Common myeloid progenitor, CD34-positive (primary cell): ENCODE measurements at regions of chr1 and their contacts with region 1.

Region 1: GRCh38 chr1:207910591-207911354 is at the start of gene CD34:
- DNase-seq: peak in 2 of 3 donors; percentile 63 to 77
- H3K4me3 ChIP-seq: peak within 1 kb of the TSS; percentile 76 to 90 (median 81)
- H3K27ac ChIP-seq: peak within 1 kb of the TSS; percentile 78 to 85
- H3K4me1 ChIP-seq: peaks cover 41 to 87% (median 73%) of the 10 kb centered on the region in 4 experiments
- H3K27me3 ChIP-seq: no peaks in the 10 kb centered on the region

Region 2: GRCh38 chr1:207828485-207829158 is 82.2 kb before region 1 on chr1:
- CTCF ChIA-PET with region 1: interaction called, 20 read pairs
- POLR2A ChIA-PET with region 1: no interaction called
- DNase-seq: peak; percentile 96
- H3K4me3 ChIP-seq: peak overlapping the region in 1 of 7 experiments; percentile 30
- H3K27ac ChIP-seq: peak overlapping the region in 1 of 2 experiments; percentile 37
- H3K4me1 ChIP-seq: peaks cover 54 to 92% (median 87%) of the 10 kb centered on the region in 4 experiments
- H3K27me3 ChIP-seq: no peaks in the 10 kb centered on the region

Region 3: DNA sequence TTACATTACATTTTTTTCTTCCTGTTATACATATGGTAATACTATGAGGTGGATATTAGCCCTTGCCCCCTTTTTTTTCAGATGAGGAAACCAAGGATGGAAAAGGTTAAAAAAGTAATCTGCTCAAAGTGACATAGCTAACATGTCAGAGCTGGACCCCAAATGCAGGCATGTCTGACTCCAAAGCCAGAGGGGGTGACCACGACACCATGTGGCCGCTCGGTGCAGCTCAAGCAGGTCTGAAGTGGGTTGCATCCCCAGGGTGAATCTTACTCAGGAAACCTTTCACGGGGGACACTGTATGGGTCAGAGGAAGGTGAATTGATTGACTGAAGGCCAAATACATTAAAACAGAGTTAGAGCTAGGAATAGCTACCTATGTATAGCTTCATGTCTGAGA is 34.6 kb before region 1 on chr1:
- CTCF ChIA-PET with region 1: interaction called, 157 read pairs
- POLR2A ChIA-PET with region 1: no interaction called
- DNase-seq: no peak
- H3K4me3 ChIP-seq: no peak overlapping the region
- H3K27ac ChIP-seq: no peak overlapping the region
- H3K4me1 ChIP-seq: peaks cover 26 to 60% (median 46%) of the 10 kb centered on the region in 4 experiments
- H3K27me3 ChIP-seq: no peaks in the 10 kb centered on the region

Region 4: GRCh38 chr1:207941665-207942064 is 30.9 kb after region 1 on chr1:
- CTCF ChIA-PET with region 1: interaction called, 12 read pairs
- POLR2A ChIA-PET with region 1: no interaction called
- DNase-seq: peak in 2 of 3 donors; percentile 40 to 48
- H3K4me3 ChIP-seq: peak overlapping the region in 3 of 7 experiments; percentile 48 to 73 (median 63)
- H3K27ac ChIP-seq: peak overlapping the region in 1 of 2 experiments; percentile 76
- H3K4me1 ChIP-seq: peaks cover 2 to 40% (median 20%) of the 10 kb centered on the region in 4 experiments
- H3K27me3 ChIP-seq: no peaks in the 10 kb centered on the region

Region 5: GRCh38 chr1:207952617-207953542 is 42.1 kb after region 1 on chr1:
- CTCF ChIA-PET with region 1: interaction called, 494 read pairs
- POLR2A ChIA-PET with region 1: interaction called, 4 read pairs
- DNase-seq: no peak
- H3K4me3 ChIP-seq: no peak overlapping the region
- H3K27ac ChIP-seq: no peak overlapping the region
- H3K4me1 ChIP-seq: peaks cover 0 to 26% (median 13%) of the 10 kb centered on the region in 4 experiments
- H3K27me3 ChIP-seq: no peaks in the 10 kb centered on the region